ENCODE measurements at regions of chr6 and their contacts with region 1.

Region 1: GRCh38 chr6:160455541-160456213 is 107.5 kb downstream of the SLC22A3 start:
- DNase-seq: peak; percentile 61

Region 2: GRCh38 chr6:159852877-159853276 is 602.8 kb before region 1 on chr6:
- in situ Hi-C with region 1: loop called (anchors 25 kb)
- DNase-seq: peak; percentile 55

Region 3: DNA sequence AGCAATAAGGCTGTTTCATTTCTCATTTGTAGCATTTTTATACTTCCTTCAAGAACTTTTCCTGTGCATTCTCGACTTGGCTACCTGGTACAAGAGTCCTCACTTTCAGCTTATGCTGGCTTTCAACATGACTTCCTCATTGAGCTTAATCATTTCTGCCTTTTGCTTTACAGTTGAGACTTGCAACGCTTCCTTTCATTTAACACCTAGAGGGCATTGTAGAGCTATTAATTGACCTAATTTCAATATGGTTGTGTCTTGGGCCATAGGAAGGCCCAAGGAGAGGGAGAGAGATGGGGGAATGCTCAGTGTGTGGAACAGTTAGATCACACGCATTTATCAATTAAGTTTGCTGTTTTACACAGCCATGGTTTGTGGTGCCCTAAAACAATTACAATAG is 234.3 kb before region 1 on chr6:
- in situ Hi-C with region 1: no loop called
- DNase-seq: peak; percentile 9

Region 4: DNA sequence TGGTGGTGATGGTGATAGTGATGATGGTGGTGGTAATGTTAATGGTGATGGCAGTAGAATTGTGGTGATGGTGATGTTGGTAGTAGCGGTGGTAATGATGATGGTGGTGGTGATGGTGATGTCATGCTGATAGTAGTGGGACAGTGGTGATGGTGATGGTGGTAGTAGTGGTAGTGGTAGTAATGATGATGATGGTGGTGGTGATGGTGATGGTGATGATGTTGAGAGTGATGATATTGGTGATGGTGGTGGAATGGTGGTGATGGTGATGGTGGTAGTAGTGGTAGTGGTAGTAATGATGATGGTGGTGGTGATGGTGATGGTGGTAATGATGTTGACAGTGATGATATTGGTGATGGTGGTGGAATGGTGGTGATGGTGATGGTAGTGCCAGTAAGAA is 79.6 kb after region 1 on chr6:
- in situ Hi-C with region 1: loop called (anchors 5 kb)
- DNase-seq: no peak

Measured in KBM-7 (cell line).